CD4-positive, alpha-beta T cell (primary cell): ENCODE measurements at regions of chr22 and their contacts with region 1.

Region 1: GRCh38 chr22:30423982-30424963 is 1.3 kb upstream of the MTFP1 start:
- DNase-seq: peak; percentile 94 to 100 (median 98)
- ATAC-seq: peak; percentile 84
- H3K4me3 ChIP-seq: peak overlapping the region; percentile 74
- H3K4me3 Mint-ChIP-seq: peak overlapping the region; percentile 99
- H3K27ac ChIP-seq: peak overlapping the region; percentile 86 to 87
- H3K27ac Mint-ChIP-seq: peak overlapping the region; percentile 98
- H3K4me1 ChIP-seq: peaks cover 53% of the 10 kb centered on the region
- H3K4me1 Mint-ChIP-seq: peaks cover 55% of the 10 kb centered on the region
- H3K27me3 ChIP-seq: no peaks in the 10 kb centered on the region
- H3K27me3 Mint-ChIP-seq: no peaks in the 10 kb centered on the region
- CTCF ChIP-seq: no peak

Region 2: GRCh38 chr22:29766632-29767170 is 657.6 kb before region 1 on chr22 and contains the start of gene ZMAT5:
- CTCF ChIA-PET with region 1: no interaction called
- POLR2A ChIA-PET with region 1: interaction called, 3 read pairs
- intact Hi-C with region 1: loop called in 1 of 2 experiments (anchors 2 kb)
- DNase-seq: peak; percentile 81 to 97 (median 88)
- ATAC-seq: peak; percentile 96
- H3K4me3 ChIP-seq: peak within 1 kb of the TSS; percentile 83
- H3K4me3 Mint-ChIP-seq: peak within 1 kb of the TSS; percentile 98
- H3K27ac ChIP-seq: peak within 1 kb of the TSS; percentile 73 to 78
- H3K27ac Mint-ChIP-seq: peak within 1 kb of the TSS; percentile 88
- H3K4me1 ChIP-seq: peaks cover 30% of the 10 kb centered on the region
- H3K4me1 Mint-ChIP-seq: peaks cover 34% of the 10 kb centered on the region
- H3K27me3 ChIP-seq: no peaks in the 10 kb centered on the region
- H3K27me3 Mint-ChIP-seq: no peaks in the 10 kb centered on the region
- CTCF ChIP-seq: no peak
- total RNA-seq, gene ZMAT5: 5.6 to 6.6 TPM

Region 3: GRCh38 chr22:30274437-30274812 is 149.8 kb before region 1 on chr22:
- CTCF ChIA-PET with region 1: no interaction called
- POLR2A ChIA-PET with region 1: no interaction called
- intact Hi-C with region 1: no loop called
- DNase-seq: no peak
- ATAC-seq: no peak
- H3K4me3 ChIP-seq: no peak overlapping the region
- H3K4me3 Mint-ChIP-seq: no peak overlapping the region
- H3K27ac ChIP-seq: no peak overlapping the region
- H3K27ac Mint-ChIP-seq: peak overlapping the region; percentile 42
- H3K4me1 ChIP-seq: peaks cover 27% of the 10 kb centered on the region
- H3K4me1 Mint-ChIP-seq: peaks cover 45% of the 10 kb centered on the region
- H3K27me3 ChIP-seq: no peaks in the 10 kb centered on the region
- H3K27me3 Mint-ChIP-seq: no peaks in the 10 kb centered on the region
- CTCF ChIP-seq: no peak

Region 4: DNA sequence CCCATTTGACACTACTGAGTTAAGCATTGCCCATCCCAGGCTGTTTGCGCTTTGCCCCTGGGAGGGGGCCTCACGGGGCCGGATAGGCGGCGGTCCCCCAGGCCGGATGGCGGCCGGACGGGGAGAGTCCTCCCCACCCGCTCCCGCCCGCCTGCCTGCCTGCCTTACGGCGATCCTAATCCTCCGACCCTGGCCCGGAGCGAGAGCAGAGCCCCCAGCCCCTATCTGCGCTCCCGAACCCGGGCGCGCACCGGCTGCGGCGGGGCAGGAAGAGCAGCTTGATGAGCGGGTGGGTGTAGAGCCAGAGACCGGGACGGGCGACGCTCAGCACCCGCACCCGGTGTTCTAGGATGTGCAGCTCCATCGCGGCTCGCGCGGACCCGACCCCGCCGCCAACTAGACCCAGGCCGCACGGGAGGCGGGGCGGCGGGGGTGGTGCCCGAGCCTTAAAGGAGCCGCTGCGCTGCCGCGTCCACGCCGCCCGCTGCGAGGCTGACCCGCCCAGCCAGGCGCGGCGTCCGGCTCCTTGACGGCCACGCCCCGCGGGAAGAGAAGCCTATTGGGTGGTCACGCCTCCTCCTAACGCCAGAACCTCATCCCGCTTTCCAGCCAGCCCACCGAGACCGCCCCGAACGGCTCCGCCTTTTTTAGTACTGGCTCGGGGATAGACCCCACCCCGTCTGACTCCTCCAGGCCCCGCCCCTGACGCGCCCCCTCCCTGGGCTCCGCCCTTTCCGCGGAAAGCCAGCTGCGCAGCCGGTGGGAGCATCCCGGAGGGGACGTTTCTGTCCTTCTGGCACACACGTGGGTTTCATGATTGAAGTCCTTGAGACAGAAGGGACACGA is 134.9 kb before region 1 on chr22 and contains the start of gene CASTOR1:
- CTCF ChIA-PET with region 1: interaction called, 22 read pairs
- POLR2A ChIA-PET with region 1: interaction called, 44 read pairs
- intact Hi-C with region 1: loop called (anchors 1 to 5 kb)
- DNase-seq: peak; percentile 75 to 96 (median 86)
- ATAC-seq: peak; percentile 78
- H3K4me3 ChIP-seq: peak within 1 kb of the TSS; percentile 75
- H3K4me3 Mint-ChIP-seq: peak within 1 kb of the TSS; percentile 97
- H3K27ac ChIP-seq: peak within 1 kb of the TSS; percentile 51 to 60
- H3K27ac Mint-ChIP-seq: peak within 1 kb of the TSS; percentile 89
- H3K4me1 ChIP-seq: peaks cover 54% of the 10 kb centered on the region
- H3K4me1 Mint-ChIP-seq: peaks cover 55% of the 10 kb centered on the region
- H3K27me3 ChIP-seq: no peaks in the 10 kb centered on the region
- H3K27me3 Mint-ChIP-seq: no peaks in the 10 kb centered on the region
- CTCF ChIP-seq: no peak
- total RNA-seq, gene CASTOR1: 7.9 to 8.8 TPM

Region 5: DNA sequence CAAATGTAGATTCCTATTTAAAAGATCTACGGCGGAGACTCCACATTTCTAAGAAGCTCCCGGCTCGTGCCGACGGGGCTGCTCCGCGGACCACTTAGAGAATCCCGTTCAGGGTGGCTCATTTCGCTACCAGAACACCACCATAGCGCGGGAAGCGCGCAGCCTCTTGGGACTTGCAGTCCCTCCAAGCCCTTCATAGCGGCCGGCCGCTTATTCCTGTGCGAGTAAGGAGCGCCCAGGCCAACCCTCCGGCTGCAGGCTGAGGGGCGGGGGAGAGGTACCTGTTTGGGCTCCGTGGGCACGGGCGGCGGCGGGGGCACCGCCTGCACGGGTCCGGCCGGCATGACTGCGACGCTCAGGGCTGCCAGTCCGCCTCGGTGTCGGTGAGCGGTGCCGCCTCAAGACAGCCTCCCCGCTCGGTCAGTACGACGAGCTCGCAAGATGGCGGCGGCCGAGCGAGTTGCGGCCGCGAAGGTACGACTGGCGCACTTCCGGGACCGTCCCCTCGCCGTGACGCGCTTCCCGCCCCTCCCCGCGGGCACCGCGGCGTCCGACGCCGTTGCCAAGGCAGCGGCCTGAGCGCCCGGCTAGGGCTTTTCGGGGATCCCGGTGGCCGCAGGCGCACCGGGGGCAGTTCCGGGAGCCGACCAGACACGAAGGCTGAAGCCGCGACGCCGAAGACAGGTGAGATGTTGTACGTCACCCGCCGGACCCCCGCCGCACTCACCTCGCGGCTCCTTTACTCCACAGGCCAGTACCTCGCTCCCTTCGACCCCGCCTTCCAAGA is 67.6 kb before region 1 on chr22 and contains the starts of genes CCDC157 and SF3A1:
- CTCF ChIA-PET with region 1: no interaction called
- POLR2A ChIA-PET with region 1: interaction called, 17 read pairs
- intact Hi-C with region 1: loop called in 1 of 2 experiments (anchors 1 kb)
- DNase-seq: peak; percentile 70 to 95 (median 80)
- ATAC-seq: peak; percentile 85
- H3K4me3 ChIP-seq: peak within 1 kb of the TSS; percentile 90
- H3K4me3 Mint-ChIP-seq: peak within 1 kb of the TSS; percentile 100
- H3K27ac ChIP-seq: peak within 1 kb of the TSS; percentile 89 to 95
- H3K27ac Mint-ChIP-seq: peak within 1 kb of the TSS; percentile 99
- H3K4me1 ChIP-seq: peaks cover 51% of the 10 kb centered on the region
- H3K4me1 Mint-ChIP-seq: peaks cover 57% of the 10 kb centered on the region
- H3K27me3 ChIP-seq: no peaks in the 10 kb centered on the region
- H3K27me3 Mint-ChIP-seq: no peaks in the 10 kb centered on the region
- CTCF ChIP-seq: no peak
- total RNA-seq, gene CCDC157: 8.3 to 10.1 TPM
- total RNA-seq, gene SF3A1: 335 to 388 TPM

Region 6: DNA sequence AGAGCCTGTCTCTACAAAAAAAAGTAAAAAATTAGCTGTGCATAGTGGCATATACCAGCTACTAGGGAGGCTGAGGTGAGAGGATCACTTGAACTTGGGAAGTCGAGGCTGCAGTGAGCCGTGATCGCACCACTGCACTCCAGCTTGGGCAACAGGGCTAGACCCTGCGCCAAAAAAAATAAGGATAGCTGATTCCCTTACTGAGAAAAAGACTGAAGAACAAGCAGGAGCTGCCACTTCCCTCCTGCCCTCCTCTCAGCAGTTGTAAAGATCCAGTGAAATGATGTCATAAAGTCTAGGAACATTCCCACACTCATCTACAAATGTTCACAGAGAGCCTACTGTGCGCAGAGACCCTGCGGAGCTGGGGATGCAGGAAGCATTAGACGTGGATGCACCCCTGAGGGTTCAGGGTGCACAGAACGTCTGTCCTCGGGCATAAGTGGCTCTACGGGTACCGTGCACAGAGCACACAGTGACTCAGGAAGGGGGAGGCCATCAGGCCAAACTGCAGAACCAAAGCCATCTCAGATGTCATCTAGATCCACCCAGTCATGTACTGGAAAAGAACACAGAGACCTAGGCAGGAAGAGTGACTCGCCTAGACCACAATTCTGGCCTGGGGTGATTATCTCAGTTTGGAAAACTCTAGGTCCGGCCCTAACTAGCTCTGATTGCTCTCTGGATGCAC is 15.7 kb before region 1 on chr22:
- CTCF ChIA-PET with region 1: interaction called, 6 read pairs
- POLR2A ChIA-PET with region 1: interaction called, 104 read pairs
- intact Hi-C with region 1: no loop called
- DNase-seq: no peak
- ATAC-seq: no peak
- H3K4me3 ChIP-seq: no peak overlapping the region
- H3K4me3 Mint-ChIP-seq: no peak overlapping the region
- H3K27ac ChIP-seq: no peak overlapping the region
- H3K27ac Mint-ChIP-seq: no peak overlapping the region
- H3K4me1 ChIP-seq: peaks cover 4% of the 10 kb centered on the region
- H3K4me1 Mint-ChIP-seq: peaks cover 26% of the 10 kb centered on the region
- H3K27me3 ChIP-seq: no peaks in the 10 kb centered on the region
- H3K27me3 Mint-ChIP-seq: no peaks in the 10 kb centered on the region
- CTCF ChIP-seq: no peak

Region 7: GRCh38 chr22:30485362-30485988 is 61.2 kb after region 1 on chr22:
- CTCF ChIA-PET with region 1: interaction called, 4 read pairs
- POLR2A ChIA-PET with region 1: interaction called, 3 read pairs
- intact Hi-C with region 1: loop called (anchors 2 to 5 kb)
- DNase-seq: peak; percentile 58 to 88 (median 74)
- ATAC-seq: peak; percentile 98
- H3K4me3 ChIP-seq: no peak overlapping the region
- H3K4me3 Mint-ChIP-seq: no peak overlapping the region
- H3K27ac ChIP-seq: no peak overlapping the region
- H3K27ac Mint-ChIP-seq: no peak overlapping the region
- H3K4me1 ChIP-seq: peaks cover 6% of the 10 kb centered on the region
- H3K4me1 Mint-ChIP-seq: no peaks in the 10 kb centered on the region
- H3K27me3 ChIP-seq: peaks cover 0 to 2% of the 10 kb centered on the region in 2 experiments
- H3K27me3 Mint-ChIP-seq: peaks cover 5% of the 10 kb centered on the region
- CTCF ChIP-seq: peak; percentile 98